AG04449 (cell line): ENCODE measurements at regions of chr2 and their contacts with region 1.

Region 1: DNA sequence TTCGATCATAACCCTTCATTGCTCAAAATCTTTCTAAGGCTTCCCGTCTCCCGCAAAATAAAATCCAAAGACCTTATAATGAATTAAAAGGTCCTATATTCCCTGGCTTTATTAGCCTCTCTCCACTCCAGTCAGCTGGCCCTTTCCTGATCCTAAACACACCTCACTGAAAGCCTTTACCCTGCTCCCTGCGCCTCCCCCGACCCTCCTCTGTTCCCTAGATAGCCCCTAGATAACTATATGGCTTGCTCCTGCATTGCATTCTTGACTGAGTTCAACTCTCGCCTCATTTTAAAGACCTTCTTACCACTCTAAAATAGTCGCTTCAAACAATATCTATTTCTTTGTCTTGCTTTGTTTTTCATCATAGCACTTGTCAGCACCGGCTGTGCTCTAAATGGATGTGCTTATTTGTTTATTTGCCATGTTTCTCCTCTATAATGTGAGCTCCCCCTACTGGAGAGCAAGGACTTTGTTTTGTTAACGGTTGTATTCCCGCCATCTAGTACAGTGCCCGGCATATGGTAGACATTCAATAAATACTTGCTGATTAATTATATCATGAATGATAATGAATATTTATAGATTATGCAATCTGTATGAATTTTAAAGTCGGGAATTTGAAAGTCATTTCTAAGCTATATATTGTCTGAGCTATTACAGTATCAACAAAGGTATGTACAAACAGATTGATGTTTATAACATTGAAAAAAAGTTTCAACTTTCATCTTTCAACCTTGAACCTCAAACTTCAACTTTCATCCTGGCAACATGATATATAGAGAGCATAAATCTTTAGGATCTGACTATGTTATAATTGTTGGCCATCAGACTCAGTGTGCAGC is 32.4 kb upstream of the VIT start:
- DNase-seq: no peak
- H3K4me3 ChIP-seq: no peak overlapping the region
- CTCF ChIP-seq: peak; percentile 55

Region 2: DNA sequence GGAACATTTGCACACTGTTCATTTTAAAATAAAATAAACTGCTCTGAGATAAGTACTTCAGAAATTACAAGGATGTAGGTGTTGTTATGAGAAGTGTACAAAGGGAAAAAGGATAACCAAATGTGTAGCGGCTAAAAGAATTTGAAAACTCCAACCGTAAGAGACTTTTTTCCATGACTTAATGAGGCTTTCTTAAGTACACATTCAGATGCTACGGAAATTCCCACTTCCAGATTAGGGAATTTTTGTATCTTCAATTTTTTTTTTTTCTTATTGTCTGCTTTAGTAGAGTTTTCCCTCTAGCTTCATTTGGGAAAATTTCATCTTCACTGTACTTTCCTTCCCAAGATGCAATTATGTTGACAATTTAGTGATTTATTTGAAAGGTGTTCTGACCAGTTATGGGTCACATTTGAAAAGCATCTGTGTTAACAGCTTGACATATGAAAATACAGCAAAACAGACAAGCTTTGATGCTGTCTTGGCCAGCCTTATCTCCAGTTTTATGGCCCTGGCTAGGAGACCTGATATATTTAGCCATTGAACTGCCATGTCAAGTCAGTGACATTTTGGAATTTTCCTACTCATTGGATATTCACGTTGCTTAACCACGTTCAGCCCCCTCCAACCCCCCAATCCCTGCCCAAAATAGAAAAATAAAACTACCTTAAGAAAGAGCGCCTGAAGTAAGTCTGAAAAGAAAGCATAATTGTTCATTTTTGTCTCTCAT is 171.7 kb before region 1 on chr2:
- CTCF ChIA-PET with region 1: interaction called, 10 read pairs
- POLR2A ChIA-PET with region 1: no interaction called
- DNase-seq: no peak
- H3K4me3 ChIP-seq: no peak overlapping the region
- CTCF ChIP-seq: no peak

Region 3: DNA sequence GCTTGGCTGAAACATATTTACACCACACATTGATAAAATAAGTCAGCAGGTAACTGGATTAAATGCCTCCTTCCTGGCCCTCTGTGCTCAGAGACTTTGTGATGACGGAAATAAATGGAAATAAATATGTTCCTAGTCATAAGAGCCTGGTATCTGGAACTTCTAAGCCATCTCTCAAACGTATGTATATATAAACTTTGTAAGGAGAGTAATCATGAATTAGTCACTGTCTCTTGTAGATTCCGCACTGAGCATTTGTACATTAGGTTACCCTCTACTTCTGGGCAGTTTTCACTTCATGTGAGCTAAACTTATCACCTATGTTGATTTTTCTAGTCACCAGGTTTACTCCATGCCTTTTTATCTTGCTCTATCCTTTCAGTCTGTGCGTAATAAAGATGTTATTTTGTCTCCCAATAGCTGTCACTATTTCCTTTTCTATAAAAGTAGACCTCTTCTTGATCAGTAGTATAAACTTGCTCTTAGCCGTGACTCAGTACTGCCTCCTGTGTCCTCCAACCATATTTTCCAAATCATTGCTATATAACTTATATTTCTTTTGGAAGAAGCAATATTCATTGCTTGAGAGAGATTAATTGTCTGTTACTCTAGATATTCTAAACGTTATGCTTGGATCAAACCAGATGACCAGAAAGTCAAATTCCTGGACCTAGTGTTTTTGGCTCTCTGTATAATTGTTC is 119.3 kb before region 1 on chr2:
- CTCF ChIA-PET with region 1: interaction called, 43 read pairs
- POLR2A ChIA-PET with region 1: no interaction called
- DNase-seq: no peak
- H3K4me3 ChIP-seq: no peak overlapping the region
- CTCF ChIP-seq: peak; percentile 10

Region 4: DNA sequence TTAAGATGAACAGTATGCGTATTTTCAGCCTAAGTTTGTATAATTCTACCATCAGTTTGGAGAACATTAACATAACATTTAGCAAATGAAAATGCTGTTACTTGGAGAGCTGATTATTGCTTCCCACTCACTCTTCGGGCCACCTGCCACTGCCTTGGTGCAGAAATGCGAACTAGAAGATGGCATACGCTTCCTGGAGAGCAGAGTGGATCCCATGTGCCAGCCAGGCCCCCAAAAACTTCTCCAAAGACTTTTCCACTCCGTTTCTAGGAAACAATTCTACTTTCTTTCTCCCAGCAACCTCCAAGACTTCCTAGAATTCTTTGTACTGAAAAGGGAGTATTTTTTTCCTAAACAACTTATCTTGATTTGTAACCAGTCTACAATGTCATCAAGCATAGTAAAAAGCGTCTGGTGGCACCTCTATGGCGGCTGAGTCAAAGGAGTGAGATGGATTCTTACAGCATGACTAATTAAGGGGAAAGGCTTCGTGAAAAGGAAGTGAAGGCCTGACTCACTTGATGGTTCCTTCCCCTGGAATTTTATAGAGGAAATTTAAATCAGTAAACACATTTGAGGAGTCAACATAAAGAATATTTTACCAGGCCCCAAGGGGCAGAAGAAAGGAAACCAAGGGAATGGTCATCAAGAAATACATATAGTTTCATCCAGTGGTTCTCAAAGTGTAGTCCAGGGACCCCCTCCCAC is 102.7 kb before region 1 on chr2:
- CTCF ChIA-PET with region 1: interaction called, 22 read pairs
- POLR2A ChIA-PET with region 1: interaction called, 3 read pairs
- DNase-seq: peak; percentile 67
- H3K4me3 ChIP-seq: no peak overlapping the region
- CTCF ChIP-seq: no peak

Region 5: DNA sequence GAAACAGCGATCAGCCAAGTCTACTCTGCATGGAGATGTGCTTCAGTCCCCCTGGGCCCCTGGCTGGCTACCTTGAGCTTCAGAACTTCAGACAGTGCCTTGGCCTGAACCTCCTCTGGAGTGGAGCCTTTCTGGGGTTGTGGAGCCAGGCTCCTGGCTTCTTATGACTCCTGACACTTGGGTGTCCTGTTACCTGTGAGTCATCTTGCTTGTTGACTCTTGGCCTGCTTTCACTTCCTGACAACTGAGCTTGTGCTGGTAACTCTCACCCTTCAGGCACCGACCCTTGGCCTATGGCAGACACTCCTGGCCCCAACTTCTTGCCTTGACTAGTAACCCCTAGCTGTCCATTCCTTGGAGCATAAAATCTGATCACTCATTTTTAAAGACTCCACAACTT is 14.0 kb before region 1 on chr2:
- CTCF ChIA-PET with region 1: interaction called, 30 read pairs
- POLR2A ChIA-PET with region 1: no interaction called
- DNase-seq: no peak
- H3K4me3 ChIP-seq: no peak overlapping the region
- CTCF ChIP-seq: no peak